Mammary epithelial cell (primary cell): ENCODE measurements at regions of chr1 and their contacts with region 1.

Region 1: GRCh38 chr1:168469690-168470089 is 74.1 kb downstream of the XCL2 start:
- DNase-seq: peak; percentile 33
- H3K4me3 ChIP-seq: no peak overlapping the region
- H3K27ac ChIP-seq: peak overlapping the region; percentile 88
- H3K4me1 ChIP-seq: peaks cover 52% of the 10 kb centered on the region
- H3K27me3 ChIP-seq: no peaks in the 10 kb centered on the region
- CTCF ChIP-seq: no peak

Region 2: DNA sequence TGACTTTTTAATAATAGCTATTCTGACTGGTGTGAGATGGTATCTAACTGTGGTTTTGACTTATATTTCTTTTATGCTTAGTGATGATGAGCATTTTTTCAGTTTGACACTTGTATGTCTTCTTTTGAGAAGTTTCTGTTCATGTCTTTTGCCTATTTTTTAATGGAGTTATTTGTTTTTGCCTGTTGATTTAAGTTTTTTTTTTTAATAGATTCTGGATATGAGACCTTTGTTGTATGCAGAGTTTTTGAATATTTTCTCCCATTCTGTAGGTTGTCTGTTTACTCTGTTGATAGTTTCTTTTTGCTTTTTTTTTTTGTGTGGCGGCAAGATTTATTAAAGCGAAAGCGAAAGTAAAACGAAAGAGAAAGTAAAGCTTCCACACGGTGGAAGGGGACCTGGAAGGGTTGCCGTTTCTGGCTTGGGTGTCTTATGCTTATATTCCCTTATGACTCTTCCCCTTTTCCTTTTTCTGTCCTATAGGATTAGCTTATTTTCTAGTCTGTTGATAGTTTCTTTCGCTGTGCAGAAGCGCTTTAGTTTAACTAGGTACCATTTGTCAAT is 121.5 kb before region 1 on chr1:
- CTCF ChIA-PET with region 1: interaction called, 15 read pairs
- dilution Hi-C with region 1: no loop called
- in situ Hi-C with region 1: no loop called
- intact Hi-C with region 1: no loop called
- DNase-seq: no peak
- H3K4me3 ChIP-seq: peak overlapping the region in 1 of 3 experiments; percentile 9
- H3K27ac ChIP-seq: no peak overlapping the region
- H3K4me1 ChIP-seq: no peaks in the 10 kb centered on the region
- H3K27me3 ChIP-seq: no peaks in the 10 kb centered on the region
- CTCF ChIP-seq: no peak

Region 3: DNA sequence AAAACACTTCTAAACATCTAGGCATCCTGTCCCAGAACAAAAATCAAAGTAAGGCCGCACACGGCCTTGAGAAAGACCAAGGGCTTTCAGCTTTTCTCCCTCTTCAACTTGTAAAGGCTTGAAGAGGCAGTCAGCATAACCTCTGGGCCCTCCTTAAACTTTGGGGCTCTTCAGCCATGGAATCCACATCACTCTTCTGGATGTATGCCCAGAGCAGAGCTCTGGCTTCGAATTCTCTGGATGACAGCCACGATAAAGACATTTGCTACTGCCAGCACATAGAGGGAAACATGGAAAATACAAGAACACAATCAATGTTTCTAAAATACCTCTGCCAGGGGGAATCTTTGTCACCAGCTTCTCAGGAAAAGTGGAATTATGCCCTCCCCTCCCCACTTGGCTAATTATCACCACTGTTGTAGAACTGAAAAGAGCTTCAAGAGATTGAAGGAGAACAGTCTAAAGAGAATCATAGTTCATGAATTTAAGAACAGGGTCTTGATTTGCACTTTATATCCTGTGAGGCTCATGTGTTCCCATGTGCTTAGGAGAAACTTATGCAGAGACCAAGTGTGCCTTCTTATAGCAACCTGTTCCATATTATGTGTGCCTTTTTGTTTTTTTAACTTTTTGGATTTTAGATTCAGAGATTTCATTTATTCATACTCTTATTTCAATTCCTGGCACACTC is 298.3 kb after region 1 on chr1:
- CTCF ChIA-PET with region 1: no interaction called
- dilution Hi-C with region 1: no loop called
- in situ Hi-C with region 1: no loop called
- intact Hi-C with region 1: no loop called
- DNase-seq: peak; percentile 7
- H3K4me3 ChIP-seq: no peak overlapping the region
- H3K27ac ChIP-seq: no peak overlapping the region
- H3K4me1 ChIP-seq: peaks cover 9% of the 10 kb centered on the region
- H3K27me3 ChIP-seq: no peaks in the 10 kb centered on the region
- CTCF ChIP-seq: no peak